ENCODE measurements at regions of chr11 and their contacts with region 1.

Region 1: GRCh38 chr11:61967116-61967923 is at the start of gene FTH1:
- DNase-seq: peak; percentile 97
- H3K4me3 Mint-ChIP-seq: peak within 1 kb of the TSS; percentile 92
- H3K27ac Mint-ChIP-seq: peak within 1 kb of the TSS; percentile 95
- H3K4me1 Mint-ChIP-seq: peaks cover 60% of the 10 kb centered on the region
- H3K27me3 Mint-ChIP-seq: no peaks in the 10 kb centered on the region
- total RNA-seq, gene FTH1: 500 and 515 TPM in 2 replicates

Region 2: GRCh38 chr11:61695917-61696316 is 271.4 kb before region 1 on chr11:
- intact Hi-C with region 1: no loop called
- DNase-seq: peak; percentile 97
- H3K4me3 Mint-ChIP-seq: peak overlapping the region; percentile 77
- H3K27ac Mint-ChIP-seq: peak overlapping the region; percentile 91
- H3K4me1 Mint-ChIP-seq: peaks cover 20% of the 10 kb centered on the region
- H3K27me3 Mint-ChIP-seq: no peaks in the 10 kb centered on the region

Region 3: DNA sequence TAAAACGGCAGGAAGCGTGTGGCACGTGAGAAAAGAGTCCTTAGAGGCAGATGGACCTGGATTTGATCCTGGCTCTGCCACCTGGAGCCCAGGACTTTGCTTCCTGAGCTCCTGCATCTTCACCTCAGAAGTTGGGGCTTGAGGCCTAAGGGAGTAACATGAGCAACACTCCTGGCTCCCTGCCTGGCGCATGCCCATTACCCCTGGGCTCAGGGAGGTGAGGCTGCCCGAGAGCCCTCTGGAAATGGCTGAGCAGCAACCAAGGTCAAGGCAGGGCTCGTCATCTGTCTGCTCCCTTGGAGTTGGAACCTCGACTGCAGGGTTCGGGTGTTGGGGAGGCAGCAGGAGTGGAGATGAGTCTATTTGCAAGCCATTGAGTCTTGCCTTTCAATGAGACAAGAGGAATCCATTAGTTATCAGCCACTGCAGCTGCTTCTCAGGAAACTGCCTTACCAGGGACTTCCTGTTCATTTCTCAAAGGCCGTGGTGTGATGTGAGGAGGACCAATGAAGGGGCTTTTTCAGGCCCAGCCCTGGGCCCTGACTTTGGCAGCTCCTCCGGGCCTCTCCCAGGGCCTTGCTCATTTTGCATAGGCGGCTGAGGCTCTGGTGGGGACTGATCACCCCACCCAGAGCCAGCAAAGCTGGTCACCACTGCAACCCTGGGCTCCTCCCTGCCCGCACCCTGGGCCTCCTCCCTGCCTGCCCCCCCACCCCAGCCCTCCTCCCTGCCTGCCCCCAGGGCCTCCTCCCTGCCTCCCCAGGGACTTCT is 132.9 kb before region 1 on chr11:
- intact Hi-C with region 1: loop called (anchors 5 kb)
- DNase-seq: peak; percentile 92
- H3K4me3 Mint-ChIP-seq: peak overlapping the region; percentile 71
- H3K27ac Mint-ChIP-seq: peak overlapping the region; percentile 93
- H3K4me1 Mint-ChIP-seq: peaks cover 59% of the 10 kb centered on the region
- H3K27me3 Mint-ChIP-seq: no peaks in the 10 kb centered on the region

Region 4: DNA sequence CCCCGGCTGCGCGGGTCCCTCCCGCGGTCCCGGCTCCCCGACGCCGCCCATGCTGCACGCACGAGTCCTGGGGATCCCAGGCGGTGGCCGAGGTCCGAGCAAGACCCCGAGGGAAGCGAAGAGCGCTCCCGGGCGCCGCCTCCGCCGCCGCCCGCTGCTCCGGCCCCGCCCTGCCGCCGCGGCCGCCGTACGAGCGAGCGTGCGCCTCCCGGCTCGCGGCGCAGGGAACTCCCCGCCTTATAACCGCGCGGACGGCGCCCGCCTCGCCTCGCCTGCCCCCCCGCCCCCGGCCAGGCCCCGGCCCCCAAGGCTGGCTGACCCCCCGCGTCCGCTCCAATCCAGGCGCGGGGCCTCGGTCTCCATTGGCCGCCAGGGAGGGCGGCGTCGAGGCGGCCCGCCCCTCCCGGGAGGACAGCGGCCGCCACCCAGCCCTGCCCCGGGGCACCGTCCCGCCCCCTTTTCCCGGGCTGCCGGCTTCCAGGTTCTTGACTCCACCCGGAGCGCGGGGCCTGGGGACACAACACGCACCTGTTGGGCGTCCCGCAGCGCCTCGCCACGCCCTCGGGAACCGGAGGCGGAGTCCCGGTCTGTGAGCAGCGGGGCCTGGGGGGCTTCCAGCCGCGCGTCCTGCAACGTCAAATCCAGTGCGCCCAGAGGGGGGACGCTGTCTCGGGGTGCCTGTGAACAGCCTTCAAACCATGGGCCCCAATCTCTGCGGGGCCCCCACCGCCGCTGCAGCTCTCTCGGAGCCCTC is 75.8 kb before region 1 on chr11 and contains the start of gene FADS3:
- intact Hi-C with region 1: loop called (anchors 5 kb)
- DNase-seq: peak; percentile 92
- H3K4me3 Mint-ChIP-seq: peak within 1 kb of the TSS; percentile 83
- H3K27ac Mint-ChIP-seq: peak within 1 kb of the TSS; percentile 29
- H3K4me1 Mint-ChIP-seq: peaks cover 4% of the 10 kb centered on the region
- H3K27me3 Mint-ChIP-seq: peaks cover 13% of the 10 kb centered on the region
- total RNA-seq, gene FADS3: 13.5 and 15.6 TPM in 2 replicates

Region 5: DNA sequence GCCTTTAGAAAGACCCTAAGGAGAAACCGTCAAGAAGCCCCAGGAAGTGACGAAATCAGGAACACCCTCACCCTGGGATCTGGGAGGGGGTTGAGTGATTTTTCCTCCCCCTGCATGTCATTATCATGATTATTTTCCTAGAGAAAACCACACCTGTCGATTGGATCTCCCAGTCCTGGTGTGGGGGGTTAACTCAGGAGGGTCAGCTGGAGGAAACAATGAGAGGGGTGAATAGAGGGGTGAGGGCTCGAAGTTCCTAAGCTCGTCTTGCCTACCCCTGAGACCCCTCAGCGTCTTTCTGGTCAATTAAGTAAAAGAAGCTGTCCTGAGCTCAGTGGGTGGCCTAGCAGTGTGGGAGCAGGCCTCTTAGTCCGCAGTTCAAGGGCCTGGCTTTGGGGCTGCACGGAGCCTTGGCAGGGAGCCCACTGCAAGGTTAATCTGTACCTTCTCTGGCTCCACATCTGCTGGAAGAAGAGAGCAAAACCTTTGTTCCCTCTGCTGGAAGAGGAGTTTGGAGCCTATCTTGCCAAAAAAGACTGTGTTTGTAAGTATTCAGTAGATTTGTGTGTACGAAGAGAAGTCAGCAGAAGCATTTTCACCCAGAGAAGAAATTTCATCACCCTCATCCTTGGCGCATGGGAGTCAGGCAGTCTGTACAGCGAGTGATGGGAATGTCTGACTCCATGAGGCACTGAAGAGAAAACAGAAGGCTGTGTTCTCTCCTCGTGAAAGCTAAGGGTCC is 34.3 kb after region 1 on chr11:
- intact Hi-C with region 1: no loop called
- DNase-seq: no peak
- H3K4me3 Mint-ChIP-seq: no peak overlapping the region
- H3K27ac Mint-ChIP-seq: no peak overlapping the region
- H3K4me1 Mint-ChIP-seq: peaks cover 5% of the 10 kb centered on the region
- H3K27me3 Mint-ChIP-seq: no peaks in the 10 kb centered on the region

Region 6: GRCh38 chr11:62025487-62026105 is 58.3 kb after region 1 on chr11:
- intact Hi-C with region 1: loop called (anchors 1 kb)
- DNase-seq: peak; percentile 93
- H3K4me3 Mint-ChIP-seq: peak overlapping the region; percentile 69
- H3K27ac Mint-ChIP-seq: peak overlapping the region; percentile 92
- H3K4me1 Mint-ChIP-seq: peaks cover 19% of the 10 kb centered on the region
- H3K27me3 Mint-ChIP-seq: no peaks in the 10 kb centered on the region

Region 7: DNA sequence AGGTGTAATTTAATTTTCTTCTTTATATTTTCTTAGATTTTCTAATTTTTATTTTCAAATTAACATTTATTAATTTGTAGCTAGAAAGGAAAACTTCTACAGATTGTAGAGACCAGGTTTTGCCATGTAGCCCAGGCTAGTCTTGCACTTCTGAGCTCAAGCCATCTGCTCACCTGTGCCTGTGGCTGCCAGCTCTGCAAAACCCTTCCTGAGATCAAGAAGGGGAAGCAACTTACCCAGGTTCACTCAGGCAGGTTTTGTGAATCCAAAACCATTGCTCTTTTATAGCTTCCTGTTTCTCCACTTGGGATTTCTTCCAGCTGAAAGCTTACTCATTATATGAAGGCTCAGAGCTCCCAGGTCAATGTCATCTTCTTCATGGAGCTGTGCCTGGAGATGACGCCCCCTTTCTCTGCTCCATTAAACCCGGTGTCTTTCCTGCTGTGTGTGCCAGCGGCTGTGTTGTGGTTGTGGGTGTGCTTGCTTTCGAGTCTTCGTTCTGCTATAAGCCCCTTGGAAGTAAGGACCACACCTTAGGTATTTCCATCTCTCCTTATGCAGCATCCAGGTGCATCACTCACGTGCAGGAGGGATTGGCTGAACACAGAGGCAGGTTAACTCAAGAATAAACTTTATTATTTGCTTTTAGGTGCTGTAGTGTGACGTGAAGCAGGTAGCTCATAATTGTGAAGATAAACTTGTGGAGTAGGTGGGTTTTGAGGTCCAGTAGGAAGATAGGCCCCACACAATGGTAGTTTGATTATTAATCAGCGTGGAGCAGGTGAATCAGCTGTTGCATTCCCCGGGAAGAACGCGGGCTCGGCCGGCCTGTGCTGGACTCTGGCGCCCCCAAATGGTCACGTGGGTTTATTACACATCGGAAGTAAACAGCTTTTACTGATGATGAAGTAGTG is 114.3 kb after region 1 on chr11:
- intact Hi-C with region 1: loop called (anchors 2 kb)
- DNase-seq: peak; percentile 93
- H3K4me3 Mint-ChIP-seq: peak overlapping the region; percentile 17
- H3K27ac Mint-ChIP-seq: no peak overlapping the region
- H3K4me1 Mint-ChIP-seq: peaks cover 6% of the 10 kb centered on the region
- H3K27me3 Mint-ChIP-seq: peaks cover 6% of the 10 kb centered on the region

Region 8: GRCh38 chr11:62123669-62124185 is 156.4 kb after region 1 on chr11 and contains the start of gene INCENP:
- intact Hi-C with region 1: loop called (anchors 5 kb)
- DNase-seq: peak; percentile 98
- H3K4me3 Mint-ChIP-seq: peak within 1 kb of the TSS; percentile 88
- H3K27ac Mint-ChIP-seq: peak within 1 kb of the TSS; percentile 81
- H3K4me1 Mint-ChIP-seq: peaks cover 30% of the 10 kb centered on the region
- H3K27me3 Mint-ChIP-seq: peaks cover 3% of the 10 kb centered on the region
- total RNA-seq, gene INCENP: 95.0 and 102 TPM in 2 replicates

Region 9: DNA sequence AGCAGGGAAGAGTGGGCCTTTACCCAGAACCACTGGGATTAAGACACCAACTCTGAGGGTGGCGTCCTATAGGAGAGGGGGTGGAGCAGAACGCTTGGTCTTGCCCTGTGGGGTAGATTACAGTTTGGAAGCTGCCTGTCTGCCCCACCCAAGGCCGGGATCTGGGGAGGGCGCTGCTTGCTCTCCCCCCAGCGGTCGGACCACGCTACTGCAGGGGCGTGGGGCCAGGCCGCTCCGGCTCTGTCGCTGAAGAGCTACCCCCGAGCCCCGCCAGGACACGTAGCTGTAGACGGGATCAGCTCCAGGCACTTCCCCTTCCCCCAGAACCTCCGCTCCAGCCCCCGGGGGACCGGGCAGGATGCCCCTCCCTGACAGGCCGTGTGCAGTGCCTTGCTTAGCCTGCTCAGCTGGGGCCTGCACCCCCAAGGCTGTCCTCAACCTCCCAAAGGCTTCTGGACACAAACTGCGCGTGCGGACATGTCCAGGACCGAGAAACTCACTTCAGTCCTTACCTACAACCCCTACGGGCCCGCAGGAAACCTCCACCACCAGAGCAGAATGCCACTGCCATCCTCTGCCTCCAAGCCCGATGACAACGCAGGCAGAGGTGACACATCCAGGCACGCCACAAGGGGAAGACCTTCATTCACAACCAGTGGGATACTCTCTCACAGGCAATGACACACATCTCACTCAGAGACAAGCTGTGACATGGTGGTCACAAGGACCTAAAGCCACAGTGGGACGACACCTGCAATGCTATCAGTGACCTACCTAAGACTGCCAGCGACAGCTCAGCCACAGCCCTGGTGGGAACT is 575.6 kb after region 1 on chr11:
- intact Hi-C with region 1: loop called (anchors 5 kb)
- DNase-seq: peak; percentile 94
- H3K4me3 Mint-ChIP-seq: peak overlapping the region; percentile 99
- H3K27ac Mint-ChIP-seq: peak overlapping the region; percentile 95
- H3K4me1 Mint-ChIP-seq: peaks cover 68% of the 10 kb centered on the region
- H3K27me3 Mint-ChIP-seq: peaks cover 5% of the 10 kb centered on the region